ENCODE measurements at regions of chr13 and their contacts with region 1.

Region 1: GRCh38 chr13:52617070-52618060 is 24.9 kb upstream of the HNRNPA1L2 start:
- DNase-seq: peak; percentile 78
- ATAC-seq: peak; percentile 98
- H3K4me3 Mint-ChIP-seq: peak overlapping the region; percentile 100
- H3K27ac Mint-ChIP-seq: peak overlapping the region; percentile 96
- H3K4me1 Mint-ChIP-seq: peaks cover 34% of the 10 kb centered on the region
- H3K27me3 Mint-ChIP-seq: peaks cover under 1% of the 10 kb centered on the region
- CTCF ChIP-seq: no peak

Region 2: DNA sequence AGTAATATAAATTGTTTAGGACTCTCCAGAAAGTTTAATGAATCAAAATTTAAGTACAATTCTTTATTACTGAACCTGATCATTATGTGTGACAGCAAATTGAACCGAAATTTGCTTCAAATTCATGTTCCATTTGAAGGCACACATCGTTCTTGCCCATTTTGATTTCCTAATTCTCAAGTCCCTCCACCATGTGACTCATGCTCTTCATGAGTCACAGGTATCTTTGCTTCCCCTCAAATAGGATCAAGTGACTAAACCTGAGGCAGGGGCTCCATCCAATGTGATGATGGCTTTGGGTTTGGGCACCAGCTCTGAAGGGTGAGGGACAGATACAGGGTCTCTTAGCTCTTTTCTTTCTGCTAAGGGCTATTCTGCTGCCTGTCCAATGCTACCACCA is 297.5 kb before region 1 on chr13:
- CTCF ChIA-PET with region 1: no interaction called
- POLR2A ChIA-PET with region 1: no interaction called
- intact Hi-C with region 1: no loop called
- DNase-seq: no peak
- ATAC-seq: no peak
- H3K4me3 Mint-ChIP-seq: no peak overlapping the region
- H3K27ac Mint-ChIP-seq: no peak overlapping the region
- H3K4me1 Mint-ChIP-seq: peaks cover 3% of the 10 kb centered on the region
- H3K27me3 Mint-ChIP-seq: peaks cover 29% of the 10 kb centered on the region
- CTCF ChIP-seq: no peak

Region 3: GRCh38 chr13:52642131-52642530 is 24.8 kb after region 1 on chr13 and contains the start of gene HNRNPA1L2:
- CTCF ChIA-PET with region 1: no interaction called
- POLR2A ChIA-PET with region 1: interaction called, 18 read pairs
- intact Hi-C with region 1: no loop called
- DNase-seq: no peak
- ATAC-seq: no peak
- H3K4me3 Mint-ChIP-seq: no peak within 1 kb of the TSS
- H3K27ac Mint-ChIP-seq: no peak within 1 kb of the TSS
- H3K4me1 Mint-ChIP-seq: peaks cover 9% of the 10 kb centered on the region
- H3K27me3 Mint-ChIP-seq: no peaks in the 10 kb centered on the region
- CTCF ChIP-seq: no peak
- total RNA-seq, gene HNRNPA1L2: 13.1 and 16.2 TPM in 2 replicates

Measured in activated B cell treated with CpG ODN at 0.5 μM for 24 hours (primary cell).